Mammary epithelial cell (primary cell): ENCODE measurements at regions of chr16 and their contacts with region 1.

Region 1: DNA sequence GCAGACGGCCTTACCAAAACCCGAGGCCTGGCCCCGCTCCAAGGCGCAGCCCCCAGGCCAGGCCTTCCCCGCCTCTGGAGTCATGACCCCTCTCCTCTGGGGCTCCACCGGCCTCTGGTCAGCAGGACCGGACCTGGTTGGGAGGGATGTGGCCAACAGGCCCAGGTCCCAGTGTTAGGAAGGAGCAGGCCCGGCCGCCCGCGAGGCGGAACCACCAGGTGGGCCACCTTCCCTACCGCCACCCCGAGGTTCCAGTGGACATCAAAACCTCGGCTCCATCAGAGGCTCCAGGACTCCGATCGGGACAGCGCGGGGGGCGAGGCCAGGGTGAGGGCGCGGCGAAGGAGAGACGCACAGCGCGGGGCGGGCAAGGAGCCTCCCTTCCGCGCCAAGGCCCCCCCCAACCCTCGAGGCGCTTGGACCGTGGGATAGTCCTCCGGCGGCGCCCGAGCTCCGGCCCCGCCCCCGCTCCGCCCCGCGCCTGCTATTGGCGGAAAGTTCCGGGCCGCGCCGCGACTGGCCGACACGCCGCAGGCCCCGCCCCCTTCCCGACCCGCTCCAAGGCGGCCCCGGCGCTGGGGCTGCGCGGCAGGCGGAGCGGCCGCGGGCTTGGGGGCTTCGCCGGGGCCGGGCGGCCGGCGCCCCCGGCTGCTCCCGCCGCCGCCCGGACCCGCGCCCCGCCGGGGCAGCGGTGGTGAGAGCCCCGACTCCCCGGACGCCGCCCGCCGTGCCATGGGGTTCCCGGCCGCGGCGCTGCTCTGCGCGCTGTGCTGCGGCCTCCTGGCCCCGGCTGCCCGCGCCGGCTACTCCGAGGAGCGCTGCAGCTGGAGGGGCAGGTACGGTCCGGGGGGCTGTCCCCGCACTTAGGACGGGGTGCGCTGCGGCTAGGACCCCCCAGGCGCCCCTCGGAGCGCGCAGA is at the start of gene METRN:
- DNase-seq: peak; percentile 75
- H3K4me3 ChIP-seq: peak within 1 kb of the TSS; percentile 37 to 64 (median 63)
- H3K27ac ChIP-seq: no peak within 1 kb of the TSS
- H3K4me1 ChIP-seq: peaks cover 28% of the 10 kb centered on the region
- H3K27me3 ChIP-seq: peaks cover 7% of the 10 kb centered on the region
- CTCF ChIP-seq: no peak
- total RNA-seq, gene METRN: 22.2 to 53.1 TPM

Region 2: GRCh38 chr16:600781-601180 is 114.0 kb before region 1 on chr16:
- CTCF ChIA-PET with region 1: interaction called, 16 read pairs
- dilution Hi-C with region 1: no loop called
- in situ Hi-C with region 1: no loop called
- intact Hi-C with region 1: no loop called
- DNase-seq: no peak
- H3K4me3 ChIP-seq: no peak overlapping the region
- H3K27ac ChIP-seq: no peak overlapping the region
- H3K4me1 ChIP-seq: peaks cover 7% of the 10 kb centered on the region
- H3K27me3 ChIP-seq: no peaks in the 10 kb centered on the region
- CTCF ChIP-seq: peak in 1 of 2 donors; percentile 25

Region 3: GRCh38 chr16:684067-684794 is 30.6 kb before region 1 on chr16 and contains the start of gene JMJD8:
- CTCF ChIA-PET with region 1: no interaction called
- dilution Hi-C with region 1: no loop called
- in situ Hi-C with region 1: no loop called
- intact Hi-C with region 1: loop called (anchors 2 kb)
- DNase-seq: peak; percentile 96
- H3K4me3 ChIP-seq: peak within 1 kb of the TSS; percentile 55 to 86 (median 68)
- H3K27ac ChIP-seq: peak within 1 kb of the TSS; percentile 52
- H3K4me1 ChIP-seq: peaks cover 53% of the 10 kb centered on the region
- H3K27me3 ChIP-seq: no peaks in the 10 kb centered on the region
- CTCF ChIP-seq: no peak
- total RNA-seq, gene JMJD8: 21.2 to 32.4 TPM

Region 4: GRCh38 chr16:788394-789126 is 73.7 kb after region 1 on chr16 and contains the start of gene CHTF18:
- CTCF ChIA-PET with region 1: interaction called, 14 read pairs
- dilution Hi-C with region 1: loop called (anchors 5 kb)
- in situ Hi-C with region 1: loop called in 1 of 2 experiments (anchors 5 kb)
- intact Hi-C with region 1: loop called (anchors 1 kb)
- DNase-seq: peak; percentile 90
- H3K4me3 ChIP-seq: peak within 1 kb of the TSS; percentile 87 to 98 (median 94)
- H3K27ac ChIP-seq: peak within 1 kb of the TSS; percentile 16
- H3K4me1 ChIP-seq: peaks cover 23% of the 10 kb centered on the region
- H3K27me3 ChIP-seq: no peaks in the 10 kb centered on the region
- CTCF ChIP-seq: no peak
- total RNA-seq, gene CHTF18: 7.7 to 54.5 TPM

Region 5: GRCh38 chr16:1054660-1055556 is 340.1 kb after region 1 on chr16:
- CTCF ChIA-PET with region 1: no interaction called
- dilution Hi-C with region 1: no loop called
- in situ Hi-C with region 1: loop called in 1 of 2 experiments (anchors 25 kb)
- intact Hi-C with region 1: loop called (anchors 1 kb)
- DNase-seq: peak; percentile 16
- H3K4me3 ChIP-seq: no peak overlapping the region
- H3K27ac ChIP-seq: no peak overlapping the region
- H3K4me1 ChIP-seq: no peaks in the 10 kb centered on the region
- H3K27me3 ChIP-seq: no peaks in the 10 kb centered on the region
- CTCF ChIP-seq: peak; percentile 57 to 81

Region 6: GRCh38 chr16:1150511-1150982 is 435.7 kb after region 1 on chr16:
- CTCF ChIA-PET with region 1: no interaction called
- dilution Hi-C with region 1: no loop called
- in situ Hi-C with region 1: no loop called
- intact Hi-C with region 1: no loop called
- DNase-seq: no peak
- H3K4me3 ChIP-seq: no peak overlapping the region
- H3K27ac ChIP-seq: no peak overlapping the region
- H3K4me1 ChIP-seq: no peaks in the 10 kb centered on the region
- H3K27me3 ChIP-seq: peaks cover 16% of the 10 kb centered on the region
- CTCF ChIP-seq: no peak